ENCODE measurements at regions of chr7 and their contacts with region 1.

Region 1: GRCh38 chr7:130912862-130913631 is 179.0 kb upstream of the KLF14 start:
- DNase-seq: peak; percentile 88
- H3K4me3 Mint-ChIP-seq: peak overlapping the region; percentile 94
- H3K27ac Mint-ChIP-seq: peak overlapping the region; percentile 97
- H3K4me1 Mint-ChIP-seq: peaks cover 54% of the 10 kb centered on the region
- H3K27me3 Mint-ChIP-seq: no peaks in the 10 kb centered on the region
- CTCF ChIP-seq: no peak

Region 2: GRCh38 chr7:130941322-130942210 is 28.5 kb after region 1 on chr7:
- CTCF ChIA-PET with region 1: interaction called, 10 read pairs
- intact Hi-C with region 1: loop called (anchors 1 kb)
- DNase-seq: peak; percentile 68
- H3K4me3 Mint-ChIP-seq: peak overlapping the region; percentile 90
- H3K27ac Mint-ChIP-seq: peak overlapping the region; percentile 97
- H3K4me1 Mint-ChIP-seq: peaks cover 46% of the 10 kb centered on the region
- H3K27me3 Mint-ChIP-seq: no peaks in the 10 kb centered on the region
- CTCF ChIP-seq: no peak

Region 3: GRCh38 chr7:130961128-130961601 is 48.1 kb after region 1 on chr7:
- CTCF ChIA-PET with region 1: interaction called, 14 read pairs
- intact Hi-C with region 1: no loop called
- DNase-seq: no peak
- H3K4me3 Mint-ChIP-seq: no peak overlapping the region
- H3K27ac Mint-ChIP-seq: peak overlapping the region; percentile 100
- H3K4me1 Mint-ChIP-seq: peaks cover 46% of the 10 kb centered on the region
- H3K27me3 Mint-ChIP-seq: no peaks in the 10 kb centered on the region
- CTCF ChIP-seq: no peak

Measured in Calu3 (cell line).